PC-9 (cell line): ENCODE measurements at regions of chr6 and their contacts with region 1.

Region 1: GRCh38 chr6:129844118-129844891 is 16.8 kb downstream of the TMEM244 start:
- DNase-seq: peak; percentile 42 to 61
- H3K4me3 ChIP-seq: no peak overlapping the region
- H3K27ac ChIP-seq: no peak overlapping the region
- H3K4me1 ChIP-seq: peaks cover 17% of the 10 kb centered on the region
- H3K27me3 ChIP-seq: no peaks in the 10 kb centered on the region
- CTCF ChIP-seq: no peak

Region 2: DNA sequence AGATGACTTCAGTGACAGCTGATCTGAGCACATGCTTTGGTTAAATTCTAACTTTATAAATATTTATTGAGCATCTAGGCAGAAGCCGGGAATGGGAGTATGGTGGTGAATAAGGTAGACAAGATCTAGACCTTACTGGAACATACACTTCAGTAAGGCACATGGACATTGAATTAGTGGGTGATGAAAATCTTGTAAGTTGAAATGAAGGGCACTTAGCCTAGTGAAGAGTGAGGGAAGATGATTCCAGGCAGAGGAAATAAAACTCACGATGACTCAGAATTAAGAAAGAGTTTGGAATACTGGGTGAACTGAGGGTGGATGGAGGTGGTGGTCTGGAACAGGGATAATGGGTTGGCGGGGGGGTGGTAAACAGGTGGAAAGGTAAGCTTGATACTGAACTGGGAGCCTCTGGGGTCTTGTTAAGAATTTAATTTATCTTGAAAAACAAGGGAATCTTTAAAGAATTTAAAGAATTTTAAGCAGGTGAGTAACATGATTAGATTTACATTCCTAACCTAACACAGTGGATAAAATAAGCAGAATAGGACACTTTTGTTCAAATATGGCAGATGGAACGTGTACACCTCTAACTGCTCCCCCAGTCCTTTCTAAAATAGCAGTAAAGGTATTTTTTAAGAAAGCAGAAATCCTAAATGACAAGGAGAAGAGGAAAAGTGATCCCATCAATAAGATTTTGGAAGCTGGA is 59.1 kb before region 1 on chr6:
- CTCF ChIA-PET with region 1: no interaction called
- POLR2A ChIA-PET with region 1: no interaction called
- intact Hi-C with region 1: loop called (anchors 5 kb)
- DNase-seq: no peak
- H3K4me3 ChIP-seq: no peak overlapping the region
- H3K27ac ChIP-seq: no peak overlapping the region
- H3K4me1 ChIP-seq: no peaks in the 10 kb centered on the region; the same call in 1 of the 2 replicates
- H3K27me3 ChIP-seq: no peaks in the 10 kb centered on the region
- CTCF ChIP-seq: no peak

Region 3: DNA sequence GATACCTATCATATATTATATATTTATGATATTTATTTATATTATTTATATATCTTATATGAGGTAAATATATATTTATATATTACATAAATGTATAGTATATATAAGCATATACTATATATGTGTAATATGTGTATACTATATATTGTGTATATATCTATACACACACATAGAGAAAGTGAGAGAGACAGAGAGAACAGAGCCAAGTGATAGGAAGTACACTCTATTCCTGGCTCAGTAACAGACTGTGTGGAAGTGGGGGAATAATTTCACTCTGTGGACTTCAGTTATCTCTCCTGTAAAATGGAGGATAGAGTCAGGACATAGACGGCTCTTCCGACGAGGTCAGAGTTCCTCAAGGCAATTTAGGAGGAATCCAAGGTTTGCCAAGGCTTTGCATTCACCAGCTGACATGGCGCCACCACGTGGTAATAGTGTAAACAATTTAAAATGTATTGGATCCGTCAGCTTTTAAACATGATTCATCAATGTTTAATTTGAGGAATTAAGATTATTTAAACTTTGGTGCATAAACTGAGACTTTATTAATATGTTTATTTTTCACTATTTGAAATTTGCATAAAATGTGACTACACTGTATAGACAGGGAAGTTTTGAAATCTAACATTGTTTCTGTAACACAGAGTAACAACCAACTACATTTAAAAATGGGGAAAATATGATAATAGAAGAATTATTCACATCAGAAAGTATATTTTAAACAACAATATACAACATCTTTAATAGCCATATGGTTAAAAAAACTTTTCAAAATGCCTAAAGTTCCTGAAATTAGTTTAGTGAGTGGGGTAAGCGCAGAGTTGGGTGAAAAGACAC is 92.2 kb after region 1 on chr6:
- CTCF ChIA-PET with region 1: no interaction called
- POLR2A ChIA-PET with region 1: no interaction called
- intact Hi-C with region 1: loop called (anchors 5 kb)
- DNase-seq: peak; percentile 21 to 58
- H3K4me3 ChIP-seq: no peak overlapping the region; the same call in 1 of the 2 replicates
- H3K27ac ChIP-seq: no peak overlapping the region
- H3K4me1 ChIP-seq: no peaks in the 10 kb centered on the region
- H3K27me3 ChIP-seq: no peaks in the 10 kb centered on the region
- CTCF ChIP-seq: peak; percentile 69